Common myeloid progenitor, CD34-positive (primary cell): ENCODE measurements at regions of chr14 and their contacts with region 1.

Region 1: GRCh38 chr14:60331201-60332045 is 82.4 kb downstream of the PPM1A start:
- DNase-seq: peak; percentile 82 to 92 (median 89)
- H3K4me3 ChIP-seq: peak overlapping the region; percentile 56 to 91 (median 71)
- H3K27ac ChIP-seq: peak overlapping the region in 1 of 2 experiments; percentile 59
- H3K4me1 ChIP-seq: peaks cover 7 to 28% (median 20%) of the 10 kb centered on the region in 4 experiments
- H3K27me3 ChIP-seq: peaks cover 0 to 9% (median 4%) of the 10 kb centered on the region in 5 experiments

Region 2: GRCh38 chr14:60195179-60195810 is 136.1 kb before region 1 on chr14:
- CTCF ChIA-PET with region 1: interaction called, 19 read pairs
- POLR2A ChIA-PET with region 1: no interaction called
- DNase-seq: peak; percentile 43 to 52 (median 49)
- H3K4me3 ChIP-seq: no peak overlapping the region
- H3K27ac ChIP-seq: peak overlapping the region in 1 of 2 experiments; percentile 1
- H3K4me1 ChIP-seq: peaks cover 8 to 27% (median 22%) of the 10 kb centered on the region in 4 experiments
- H3K27me3 ChIP-seq: no peaks in the 10 kb centered on the region

Region 3: GRCh38 chr14:60248697-60249318 is 82.6 kb before region 1 on chr14 and contains the start of gene PPM1A:
- CTCF ChIA-PET with region 1: interaction called, 14 read pairs
- POLR2A ChIA-PET with region 1: interaction called, 4 read pairs
- DNase-seq: peak; percentile 95 to 98 (median 97)
- H3K4me3 ChIP-seq: peak within 1 kb of the TSS; percentile 65 to 95 (median 84)
- H3K27ac ChIP-seq: peak within 1 kb of the TSS; percentile 94 to 98
- H3K4me1 ChIP-seq: peaks cover 21 to 44% (median 31%) of the 10 kb centered on the region in 4 experiments
- H3K27me3 ChIP-seq: no peaks in the 10 kb centered on the region

Region 4: DNA sequence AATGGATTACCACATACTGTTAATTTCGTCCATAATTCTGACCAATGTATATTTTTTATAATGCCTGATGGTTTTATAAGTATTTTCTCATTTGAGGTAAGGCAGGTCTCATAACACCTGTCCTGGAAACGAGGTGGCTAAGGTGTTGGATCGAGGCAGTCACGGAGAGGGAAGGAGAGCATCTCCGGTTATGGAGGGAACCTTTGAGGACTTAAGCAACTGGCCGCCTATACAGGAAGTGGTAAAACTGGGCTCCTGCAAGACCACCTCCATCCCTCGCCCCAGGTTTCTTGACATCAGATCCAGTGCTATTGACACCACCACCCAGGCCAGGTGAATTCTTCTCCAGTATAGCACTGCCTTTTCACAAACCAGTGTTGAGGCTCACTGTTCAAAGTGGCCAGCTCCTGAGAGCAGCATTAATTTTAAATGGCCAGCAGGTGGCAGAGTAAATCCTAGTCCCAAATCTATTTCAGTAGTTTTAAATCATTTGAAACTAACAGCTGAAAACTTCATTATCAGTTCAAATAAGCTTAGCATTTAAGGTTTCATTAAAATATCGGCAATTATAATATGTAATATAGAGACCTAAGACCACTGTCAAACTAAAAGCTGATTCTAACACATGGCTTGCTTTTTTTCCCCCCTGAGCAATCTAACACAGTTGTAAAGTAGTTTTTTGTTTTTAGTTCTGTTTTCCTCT is 18.4 kb after region 1 on chr14:
- CTCF ChIA-PET with region 1: interaction called, 20 read pairs
- POLR2A ChIA-PET with region 1: interaction called, 3 read pairs
- DNase-seq: peak; percentile 50 to 75 (median 64)
- H3K4me3 ChIP-seq: no peak overlapping the region
- H3K27ac ChIP-seq: no peak overlapping the region
- H3K4me1 ChIP-seq: no peaks in the 10 kb centered on the region
- H3K27me3 ChIP-seq: peaks cover 0 to 7% (median 1%) of the 10 kb centered on the region in 5 experiments

Region 5: GRCh38 chr14:60485598-60486251 is 154.3 kb after region 1 on chr14 and contains the start of gene C14orf39:
- CTCF ChIA-PET with region 1: no interaction called
- POLR2A ChIA-PET with region 1: no interaction called
- DNase-seq: peak; percentile 43 to 79 (median 69)
- H3K4me3 ChIP-seq: peak within 1 kb of the TSS in 6 of 7 experiments; percentile 13 to 61 (median 34)
- H3K27ac ChIP-seq: no peak within 1 kb of the TSS
- H3K4me1 ChIP-seq: peaks cover 0 to 12% (median 11%) of the 10 kb centered on the region in 4 experiments
- H3K27me3 ChIP-seq: peaks cover 6 to 92% (median 54%) of the 10 kb centered on the region in 5 experiments

Region 6: DNA sequence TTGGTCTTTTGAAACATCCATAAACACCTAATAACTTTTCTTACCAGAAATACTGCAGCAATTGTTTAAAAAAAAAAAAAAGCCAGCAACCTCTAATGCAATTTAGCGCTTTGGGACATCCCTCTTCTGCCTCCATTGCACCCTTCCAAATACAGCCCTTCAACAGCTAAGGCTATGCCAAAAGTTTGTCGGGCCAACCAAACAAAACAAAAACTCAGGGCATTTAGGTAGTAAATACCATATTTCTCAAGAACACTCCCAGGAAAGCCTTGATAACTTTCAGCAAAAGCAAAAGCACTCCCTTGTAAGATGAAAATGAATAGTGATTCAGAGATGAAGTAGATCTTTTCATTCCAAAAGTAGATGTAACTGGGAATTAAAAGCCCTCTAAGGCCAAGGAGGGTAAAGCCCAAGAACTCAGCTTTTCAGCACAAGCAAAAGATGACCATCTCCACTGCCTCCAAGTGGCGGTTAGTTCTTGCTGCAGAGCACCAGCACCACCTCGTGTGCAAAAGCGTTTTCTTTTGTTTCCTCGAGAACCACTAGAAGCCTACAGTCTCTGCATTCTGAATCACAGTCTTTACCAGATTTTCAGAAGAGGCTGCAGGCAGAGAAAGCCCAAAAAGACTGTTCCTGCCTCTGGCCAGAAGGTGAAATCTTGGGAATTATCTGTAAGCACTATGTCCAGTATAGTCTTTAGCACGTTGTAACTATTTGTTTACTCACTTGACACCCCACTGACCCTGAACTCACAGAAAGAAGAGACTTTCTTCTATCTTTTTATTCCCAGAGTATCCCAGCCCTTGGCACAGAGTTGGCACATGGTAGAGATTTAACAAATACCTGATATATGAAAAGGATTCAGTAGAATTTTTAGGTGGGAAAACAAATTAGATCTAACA is 230.7 kb after region 1 on chr14:
- CTCF ChIA-PET with region 1: interaction called, 20 read pairs
- POLR2A ChIA-PET with region 1: no interaction called
- DNase-seq: peak; percentile 64 to 81 (median 80)
- H3K4me3 ChIP-seq: no peak overlapping the region
- H3K27ac ChIP-seq: no peak overlapping the region
- H3K4me1 ChIP-seq: no peaks in the 10 kb centered on the region
- H3K27me3 ChIP-seq: peaks cover 0 to 8% (median 0%) of the 10 kb centered on the region in 5 experiments